Caco-2 (cell line): ENCODE measurements at regions of chr1 and their contacts with region 1.

Region 1: DNA sequence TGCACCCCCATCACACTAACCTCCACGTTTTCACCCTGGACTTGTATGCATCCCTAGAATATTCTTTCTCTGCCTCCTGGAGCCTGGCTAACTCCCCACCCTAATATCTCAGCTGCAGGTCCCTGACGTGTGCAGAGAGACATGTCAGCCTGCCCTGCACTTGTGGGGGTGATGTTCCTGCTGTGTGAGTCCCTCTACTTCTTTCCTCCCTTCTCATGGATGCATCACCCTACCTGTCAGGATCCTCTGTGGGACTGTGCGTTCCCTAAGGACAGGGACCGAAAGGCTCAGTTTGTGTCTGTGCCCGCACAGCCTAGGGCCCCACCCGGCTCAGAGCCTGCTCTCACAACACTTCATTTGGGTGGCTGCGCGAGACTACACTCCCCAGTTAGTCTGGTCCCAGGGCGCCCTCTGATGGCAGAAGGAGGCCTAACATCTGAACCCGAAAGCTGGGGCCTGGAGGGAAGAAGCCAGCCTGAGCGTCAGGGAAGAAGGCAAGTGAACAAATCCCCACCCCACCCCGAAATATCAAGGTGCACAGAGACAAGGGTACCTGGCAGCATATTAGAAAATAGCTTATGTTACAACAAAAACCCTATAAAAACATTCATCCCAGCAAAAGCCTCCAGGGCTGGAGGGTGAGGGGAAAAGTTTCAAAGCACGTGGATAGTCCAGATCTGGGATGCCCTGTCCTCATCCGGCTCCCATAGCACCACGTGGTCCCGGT is 3.7 kb downstream of the CD52 start:
- DNase-seq: peak; percentile 77 to 83
- H3K4me3 ChIP-seq: no peak overlapping the region
- H3K4me3 Mint-ChIP-seq: no peak overlapping the region
- H3K27ac Mint-ChIP-seq: peak overlapping the region; percentile 14
- H3K4me1 ChIP-seq: no peaks in the 10 kb centered on the region
- H3K4me1 Mint-ChIP-seq: no peaks in the 10 kb centered on the region
- H3K27me3 ChIP-seq: no peaks in the 10 kb centered on the region
- H3K27me3 Mint-ChIP-seq: no peaks in the 10 kb centered on the region
- CTCF ChIP-seq: peak; percentile 72

Region 2: GRCh38 chr1:26279456-26280332 is 41.8 kb before region 1 on chr1 and contains the start of gene SH3BGRL3:
- CTCF ChIA-PET with region 1: interaction called, 8 read pairs
- POLR2A ChIA-PET with region 1: no interaction called
- intact Hi-C with region 1: loop called (anchors 1 kb)
- DNase-seq: peak; percentile 76 to 86
- H3K4me3 ChIP-seq: peak within 1 kb of the TSS; percentile 82
- H3K4me3 Mint-ChIP-seq: peak within 1 kb of the TSS; percentile 88
- H3K27ac Mint-ChIP-seq: peak within 1 kb of the TSS; percentile 81
- H3K4me1 ChIP-seq: peaks cover 47% of the 10 kb centered on the region
- H3K4me1 Mint-ChIP-seq: peaks cover 36% of the 10 kb centered on the region
- H3K27me3 ChIP-seq: no peaks in the 10 kb centered on the region
- H3K27me3 Mint-ChIP-seq: no peaks in the 10 kb centered on the region
- CTCF ChIP-seq: peak in 1 of 2 experiments; percentile 58
- total RNA-seq, gene SH3BGRL3: 73.4 and 74.3 TPM in 2 replicates

Region 3: GRCh38 chr1:26336477-26337205 is 15.2 kb after region 1 on chr1:
- CTCF ChIA-PET with region 1: no interaction called
- POLR2A ChIA-PET with region 1: no interaction called
- intact Hi-C with region 1: no loop called
- DNase-seq: peak in 1 of 2 experiments; percentile 19
- H3K4me3 ChIP-seq: no peak overlapping the region
- H3K4me3 Mint-ChIP-seq: no peak overlapping the region
- H3K27ac Mint-ChIP-seq: no peak overlapping the region
- H3K4me1 ChIP-seq: no peaks in the 10 kb centered on the region
- H3K4me1 Mint-ChIP-seq: no peaks in the 10 kb centered on the region
- H3K27me3 ChIP-seq: no peaks in the 10 kb centered on the region
- H3K27me3 Mint-ChIP-seq: no peaks in the 10 kb centered on the region
- CTCF ChIP-seq: no peak